ENCODE measurements at regions of chr9 and their contacts with region 1.

Region 1: GRCh38 chr9:20622330-20623020 is at the start of gene MLLT3:
- DNase-seq: peak; percentile 91
- H3K4me3 ChIP-seq: peak within 1 kb of the TSS; percentile 89
- H3K27ac ChIP-seq: peak within 1 kb of the TSS; percentile 62
- H3K27me3 ChIP-seq: no peaks in the 10 kb centered on the region
- CTCF ChIP-seq: 0 out of 2 replicates have a peak, but pooled peaks have one; percentile 7
- polyA plus RNA-seq, gene MLLT3: 26.5 and 32.5 TPM in 2 replicates

Region 2: DNA sequence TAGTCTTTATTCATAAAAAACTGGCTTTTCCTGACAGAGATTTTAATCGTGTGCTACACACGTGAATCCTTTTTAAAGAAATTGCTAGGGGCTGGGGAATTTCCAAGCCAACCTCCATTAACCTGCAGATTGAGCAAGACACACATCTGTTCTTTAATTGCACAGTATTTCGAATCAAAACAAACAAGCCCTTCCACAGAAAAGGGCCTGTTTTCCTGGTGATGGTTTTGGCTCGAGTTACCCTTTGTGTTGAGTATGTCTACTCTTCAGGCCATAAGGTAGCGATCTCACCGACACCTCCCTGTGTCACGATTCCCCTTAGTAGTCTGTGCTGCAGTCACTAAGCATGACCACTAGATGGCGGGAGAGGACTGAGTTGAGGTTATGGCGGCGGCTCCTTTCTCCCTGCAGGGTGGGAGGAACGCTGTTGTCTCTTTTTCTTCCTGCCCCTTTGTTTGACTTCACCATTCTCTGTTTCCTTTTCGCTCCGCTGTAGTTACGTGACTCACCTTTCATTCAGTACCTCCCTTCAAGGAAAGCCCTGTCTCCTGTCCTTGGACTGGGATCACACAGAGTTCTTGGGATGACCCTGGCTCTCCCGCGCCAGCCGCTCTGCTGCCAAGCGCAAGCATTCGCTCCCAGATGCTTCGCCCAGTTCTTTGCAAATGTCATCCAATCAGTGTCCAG is 696.5 kb before region 1 on chr9:
- CTCF ChIA-PET with region 1: interaction called, 11 read pairs
- POLR2A ChIA-PET with region 1: no interaction called
- DNase-seq: peak; percentile 55
- H3K4me3 ChIP-seq: peak overlapping the region; percentile 65
- H3K27ac ChIP-seq: no peak overlapping the region
- H3K27me3 ChIP-seq: no peaks in the 10 kb centered on the region
- CTCF ChIP-seq: peak; percentile 98

Region 3: GRCh38 chr9:20604562-20604961 is 17.9 kb before region 1 on chr9:
- CTCF ChIA-PET with region 1: interaction called, 32 read pairs
- POLR2A ChIA-PET with region 1: interaction called, 9 read pairs
- DNase-seq: no peak
- H3K4me3 ChIP-seq: peak overlapping the region; percentile 21
- H3K27ac ChIP-seq: no peak overlapping the region
- H3K27me3 ChIP-seq: no peaks in the 10 kb centered on the region
- CTCF ChIP-seq: no peak

Region 4: DNA sequence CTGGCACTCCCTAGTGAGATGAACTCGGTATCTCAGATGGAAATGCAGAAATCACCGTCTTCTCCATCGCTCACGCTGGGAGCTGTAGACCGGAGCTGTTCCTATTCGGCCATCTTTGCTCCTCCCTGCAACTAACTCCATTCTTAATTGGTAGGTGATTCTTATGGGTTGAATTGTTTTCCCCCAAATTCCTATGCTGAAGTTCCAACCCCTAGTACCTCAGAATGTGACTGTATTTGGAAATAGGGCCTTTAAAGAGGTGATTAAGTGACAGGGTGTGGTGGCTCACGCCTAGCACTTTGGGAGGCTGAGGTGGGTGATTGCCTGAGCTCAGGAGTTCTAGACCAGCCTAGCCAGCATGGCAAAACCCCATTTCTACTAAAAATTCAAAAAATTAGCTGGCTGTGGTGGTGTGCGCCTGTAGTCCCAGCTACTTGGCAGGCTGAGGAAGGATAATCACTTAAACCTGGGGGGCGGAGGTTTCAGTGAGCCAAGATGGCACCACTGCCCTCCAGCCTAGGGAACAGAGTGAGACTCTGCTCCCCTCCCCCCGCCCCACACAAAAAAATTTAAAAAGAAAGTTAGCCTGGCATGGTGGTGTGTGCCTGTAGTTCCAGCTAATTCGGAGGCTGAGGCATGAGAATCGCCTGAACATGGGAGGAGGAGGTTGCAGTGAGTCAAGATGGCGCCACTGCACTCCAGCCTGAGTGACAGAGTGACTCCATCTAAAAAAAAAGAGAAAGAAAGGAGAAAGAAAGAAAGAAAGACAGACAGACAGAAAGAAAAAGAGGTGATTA is 36.4 kb after region 1 on chr9:
- CTCF ChIA-PET with region 1: interaction called, 4 read pairs
- POLR2A ChIA-PET with region 1: interaction called, 13 read pairs
- DNase-seq: no peak
- H3K4me3 ChIP-seq: peak overlapping the region; percentile 18
- H3K27ac ChIP-seq: no peak overlapping the region
- H3K27me3 ChIP-seq: peaks cover 3% of the 10 kb centered on the region
- CTCF ChIP-seq: no peak

Region 5: DNA sequence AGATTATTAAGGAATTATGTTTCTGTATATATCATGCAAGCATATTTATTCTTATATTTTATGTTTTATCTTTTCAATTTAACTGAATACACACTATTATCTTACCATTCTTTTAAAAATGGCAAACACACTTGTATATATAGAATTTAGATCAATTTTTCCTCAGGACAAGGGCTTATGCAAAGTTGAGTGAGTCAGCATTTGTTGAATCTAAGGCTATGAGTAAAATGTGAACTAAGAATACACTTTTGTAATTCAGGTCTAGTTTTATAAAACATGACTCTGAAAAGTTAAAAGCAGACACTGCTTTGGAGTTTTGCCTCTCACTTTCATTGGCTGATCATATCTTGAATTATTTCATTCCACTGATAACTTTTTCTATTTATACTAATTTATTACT is 189.4 kb after region 1 on chr9:
- CTCF ChIA-PET with region 1: no interaction called
- POLR2A ChIA-PET with region 1: no interaction called
- DNase-seq: no peak
- H3K4me3 ChIP-seq: no peak overlapping the region
- H3K27ac ChIP-seq: no peak overlapping the region
- H3K27me3 ChIP-seq: no peaks in the 10 kb centered on the region
- CTCF ChIP-seq: no peak

Region 6: GRCh38 chr9:20929276-20929675 is 306.8 kb after region 1 on chr9:
- CTCF ChIA-PET with region 1: interaction called, 17 read pairs
- POLR2A ChIA-PET with region 1: no interaction called
- DNase-seq: no peak
- H3K4me3 ChIP-seq: no peak overlapping the region
- H3K27ac ChIP-seq: no peak overlapping the region
- H3K27me3 ChIP-seq: no peaks in the 10 kb centered on the region
- CTCF ChIP-seq: no peak

Region 7: GRCh38 chr9:21081451-21081850 is 459.0 kb after region 1 on chr9:
- CTCF ChIA-PET with region 1: interaction called, 3 read pairs
- POLR2A ChIA-PET with region 1: interaction called, 11 read pairs
- DNase-seq: no peak
- H3K4me3 ChIP-seq: no peak overlapping the region
- H3K27ac ChIP-seq: no peak overlapping the region
- H3K27me3 ChIP-seq: no peaks in the 10 kb centered on the region
- CTCF ChIP-seq: no peak

Region 8: DNA sequence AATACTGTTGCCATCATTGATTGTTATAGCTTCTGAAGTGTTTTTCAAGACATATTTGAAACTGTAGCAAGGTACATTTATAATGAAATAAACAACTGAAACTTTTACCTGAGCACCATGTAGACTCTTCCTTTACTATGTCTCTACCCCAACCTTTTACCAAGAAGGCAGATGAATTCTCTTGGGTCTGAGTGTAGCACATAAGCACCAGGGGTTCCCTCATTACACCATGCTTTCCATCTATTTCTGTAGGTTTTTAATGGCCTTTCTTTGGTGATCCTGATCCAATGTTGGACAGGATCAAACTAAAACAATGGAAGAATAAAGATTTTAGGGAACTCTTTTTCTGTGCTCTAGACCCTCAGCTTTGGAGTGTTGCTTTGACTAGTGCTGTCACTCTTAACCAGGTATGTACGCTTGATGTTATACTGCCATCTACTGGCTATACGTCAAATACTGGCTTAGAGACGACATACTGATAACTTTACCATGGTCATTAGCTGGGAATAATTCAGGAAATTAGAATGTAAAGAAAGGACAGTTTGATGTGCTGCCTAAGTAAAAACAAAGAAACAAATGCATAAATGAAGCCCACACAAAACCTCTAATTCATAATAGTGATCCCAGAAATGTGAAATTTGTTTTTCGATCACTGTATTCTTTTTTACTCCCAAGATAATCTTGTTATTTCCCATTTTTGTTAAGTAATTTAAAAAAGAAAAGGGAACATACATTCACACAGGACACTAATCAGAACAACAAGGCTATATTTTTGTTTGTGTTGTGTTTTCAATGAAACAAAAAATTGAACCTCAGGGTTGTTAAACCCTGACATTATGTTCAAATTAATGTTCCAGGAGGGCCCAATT is 488.5 kb after region 1 on chr9:
- CTCF ChIA-PET with region 1: interaction called, 103 read pairs
- POLR2A ChIA-PET with region 1: no interaction called
- DNase-seq: peak; percentile 56
- H3K4me3 ChIP-seq: no peak overlapping the region
- H3K27ac ChIP-seq: no peak overlapping the region
- H3K27me3 ChIP-seq: no peaks in the 10 kb centered on the region
- CTCF ChIP-seq: peak; percentile 91

Measured in AG04450 (cell line).